Esophagus muscularis mucosa (tissue), 4 donors: ENCODE measurements at regions of chrX and their contacts with region 1.

Region 1: GRCh38 chrX:100685284-100685996 is 41.4 kb downstream of the SRPX2 start:
- DNase-seq: peak; percentile 93
- H3K4me3 ChIP-seq: no peak overlapping the region
- H3K27ac ChIP-seq: peak overlapping the region in 1 of 4 donors; percentile 15
- H3K4me1 ChIP-seq: peaks cover 0 to 17% (median 3%) of the 10 kb centered on the region in 4 donors
- H3K27me3 ChIP-seq: no peaks in the 10 kb centered on the region
- CTCF ChIP-seq: peak; percentile 76 to 88 (median 87)
- EP300 ChIP-seq: no peak
- POLR2A ChIP-seq: no peak

Region 2: GRCh38 chrX:100731441-100732281 is 46.2 kb after region 1 on chrX and contains the start of gene SYTL4:
- intact Hi-C with region 1: loop called (anchors 5 kb)
- DNase-seq: no peak
- H3K4me3 ChIP-seq: peak within 1 kb of the TSS; percentile 65 to 83 (median 76)
- H3K27ac ChIP-seq: peak within 1 kb of the TSS; percentile 48 to 77 (median 70)
- H3K4me1 ChIP-seq: peaks cover 0 to 26% (median 6%) of the 10 kb centered on the region in 4 donors
- H3K27me3 ChIP-seq: peaks cover 0 to 8% (median 0%) of the 10 kb centered on the region in 4 donors
- CTCF ChIP-seq: no peak
- EP300 ChIP-seq: no peak
- POLR2A ChIP-seq: no peak
- total RNA-seq, gene SYTL4: 14.9 to 30.7 (median 27.8) TPM